ENCODE measurements at regions of chr2 and their contacts with region 1.

Region 1: DNA sequence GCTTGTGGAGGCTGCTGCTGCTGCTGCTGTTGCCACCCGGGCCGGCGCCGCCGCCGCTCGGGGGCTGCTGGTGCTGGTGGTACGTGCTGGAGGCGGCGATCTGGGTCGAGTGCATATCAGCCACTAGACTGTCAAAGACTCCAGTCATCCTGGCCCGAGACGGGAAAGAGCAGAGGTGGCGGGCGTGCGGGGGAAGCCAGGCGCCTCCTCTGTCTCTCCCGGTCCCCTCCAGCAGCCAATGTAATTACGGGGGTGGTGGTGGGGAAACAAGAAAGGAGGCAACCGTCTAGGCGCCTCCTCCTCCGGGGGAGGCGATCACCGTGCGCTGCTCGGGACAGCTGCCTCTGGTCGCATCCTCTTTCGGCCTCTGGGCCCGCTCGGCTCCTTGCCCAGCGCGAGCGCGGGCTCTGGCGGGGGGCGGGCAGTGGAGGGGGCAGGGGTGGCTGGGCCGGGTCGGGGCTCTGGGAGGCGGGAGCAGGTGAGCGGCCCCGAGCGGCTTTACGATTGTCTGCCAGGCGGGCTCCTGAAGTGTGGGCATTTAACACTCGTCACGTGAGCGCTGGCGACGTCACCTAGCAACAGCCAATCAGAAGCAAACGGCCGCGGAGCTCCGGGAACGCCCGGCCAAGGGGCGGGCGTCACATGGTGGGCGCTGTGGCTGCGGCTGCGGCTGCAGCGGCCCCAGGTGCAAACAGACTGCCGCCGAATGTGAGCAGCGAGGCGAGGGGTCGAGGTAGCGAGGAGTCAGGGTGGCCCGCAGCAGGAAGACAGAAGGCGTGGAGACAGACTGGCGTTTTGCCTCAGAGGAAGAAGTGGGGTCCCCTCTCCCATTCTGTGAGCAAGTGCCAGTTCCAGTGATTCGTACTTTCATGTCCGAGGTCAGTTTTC is at the start of gene DLX2:
- DNase-seq: peak in 8 of 10 donors; percentile 38 to 74 (median 46)
- ATAC-seq: peak; percentile 33 to 35
- H3K4me3 Mint-ChIP-seq: peak within 1 kb of the TSS; percentile 66 to 92 (median 84)
- H3K27ac Mint-ChIP-seq: peak within 1 kb of the TSS in 7 of 10 donors; percentile 17 to 90 (median 60)
- H3K4me1 Mint-ChIP-seq: peaks cover 24 to 62% (median 56%) of the 10 kb centered on the region in 4 donors
- H3K27me3 Mint-ChIP-seq: peaks cover 31 to 83% (median 61%) of the 10 kb centered on the region in 5 donors
- polyA plus RNA-seq, gene DLX2: not detected

Region 2: DNA sequence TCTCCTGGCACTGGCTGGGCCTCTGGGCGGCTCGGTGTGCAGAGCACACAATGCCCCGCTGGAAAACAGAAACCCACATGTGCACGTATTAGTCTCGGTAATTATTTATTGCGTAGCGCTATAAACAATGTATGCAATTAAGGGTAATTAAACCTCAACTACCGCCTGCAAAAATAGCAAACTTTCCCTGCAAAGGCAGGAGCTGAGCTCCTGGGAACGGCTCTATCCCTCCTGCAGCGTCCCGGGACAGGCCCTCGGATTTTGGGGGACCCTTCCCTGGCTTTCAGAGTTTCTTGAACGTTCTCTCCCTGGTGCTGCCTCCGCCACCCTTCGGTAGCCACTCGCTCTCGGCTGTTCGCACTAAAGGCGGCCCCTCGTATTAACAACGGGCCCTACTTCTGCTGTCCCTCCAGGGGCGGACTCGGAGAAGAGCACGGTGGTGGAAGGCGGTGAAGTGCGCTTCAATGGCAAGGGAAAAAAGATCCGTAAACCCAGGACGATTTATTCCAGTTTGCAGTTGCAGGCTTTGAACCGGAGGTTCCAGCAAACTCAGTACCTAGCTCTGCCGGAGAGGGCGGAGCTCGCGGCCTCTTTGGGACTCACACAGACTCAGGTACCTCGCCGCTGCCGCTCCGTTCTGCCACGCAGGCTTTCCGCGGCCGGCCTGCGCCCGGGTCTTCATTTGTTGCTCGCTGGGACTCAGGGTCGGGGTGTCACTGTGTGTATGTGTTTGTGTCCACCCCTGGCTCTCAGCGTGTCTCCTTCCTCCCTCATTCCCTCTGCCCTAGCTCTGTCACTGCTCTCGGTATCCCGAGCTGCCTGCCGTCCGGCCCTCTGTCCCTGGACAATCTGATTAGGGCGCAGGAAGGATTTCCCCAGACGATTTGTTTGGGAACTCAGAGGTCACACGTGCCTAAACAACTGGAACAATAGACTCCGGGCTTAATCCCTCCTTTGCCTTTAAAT is 16.1 kb before region 1 on chr2:
- POLR2A ChIA-PET with region 1: interaction called, 40 read pairs
- DNase-seq: peak in 9 of 10 donors; percentile 40 to 77 (median 56)
- ATAC-seq: peak; percentile 65 to 73
- H3K4me3 Mint-ChIP-seq: peak overlapping the region; percentile 42 to 84 (median 61)
- H3K27ac Mint-ChIP-seq: peak overlapping the region in 4 of 10 donors; percentile 53 to 93 (median 80)
- H3K4me1 Mint-ChIP-seq: peaks cover 21 to 60% (median 49%) of the 10 kb centered on the region in 4 donors
- H3K27me3 Mint-ChIP-seq: peaks cover 52 to 99% (median 74%) of the 10 kb centered on the region in 5 donors

Measured in naive thymus-derived CD8-positive, alpha-beta T cell (primary cell).